A549 (cell line): ENCODE measurements at regions of chr2 and their contacts with region 1.

Region 1: GRCh38 chr2:12918835-12919445 is 202.2 kb downstream of the TRIB2 start:
- DNase-seq: no peak
- ATAC-seq: no peak
- H3K4me3 ChIP-seq: no peak overlapping the region
- H3K27ac ChIP-seq: no peak overlapping the region
- H3K4me1 ChIP-seq: no peaks in the 10 kb centered on the region
- CTCF ChIP-seq: no peak
- EP300 ChIP-seq: no peak
- POLR2A ChIP-seq: no peak
- RAD21 ChIP-seq: no peak

Region 2: GRCh38 chr2:12931186-12931844 is 12.4 kb after region 1 on chr2:
- CTCF ChIA-PET with region 1: interaction called, 17 read pairs
- POLR2A ChIA-PET with region 1: no interaction called
- DNase-seq: peak; percentile 4 to 19
- ATAC-seq: peak; percentile 47 to 83; a peak in 3 of 6 replicates
- H3K4me3 ChIP-seq: no peak overlapping the region
- H3K27ac ChIP-seq: no peak overlapping the region
- H3K4me1 ChIP-seq: no peaks in the 10 kb centered on the region
- CTCF ChIP-seq: peak; percentile 43
- EP300 ChIP-seq: no peak
- POLR2A ChIP-seq: no peak
- RAD21 ChIP-seq: peak; percentile 46 to 51